Activated T-helper 2 cell treated with anti-CD3 and anti-CD28 coated beads, Interferon-gamma antibody, Interleukin-2, Interleukin-4, amounts not matched to agents 10 μg/mL and 5 μg/mL and 100 μg/mL, durations not matched to agents 14 hours and 24 hours and 36 hours (primary cell): ENCODE measurements at regions of chr11 and their contacts with region 1.

Region 1: GRCh38 chr11:8911029-8911826 is at the start of gene AKIP1:
- DNase-seq: peak; percentile 73
- H3K4me3 Mint-ChIP-seq: peak within 1 kb of the TSS; percentile 94
- H3K27ac Mint-ChIP-seq: peak within 1 kb of the TSS; percentile 82
- H3K4me1 Mint-ChIP-seq: peaks cover 36% of the 10 kb centered on the region
- H3K27me3 Mint-ChIP-seq: peaks cover 30% of the 10 kb centered on the region
- total RNA-seq, gene AKIP1: 22.2 and 23.4 TPM in 2 replicates

Region 2: GRCh38 chr11:8899119-8899753 is 12.0 kb before region 1 on chr11:
- intact Hi-C with region 1: no loop called
- DNase-seq: no peak
- H3K4me3 Mint-ChIP-seq: no peak overlapping the region
- H3K27ac Mint-ChIP-seq: no peak overlapping the region
- H3K4me1 Mint-ChIP-seq: no peaks in the 10 kb centered on the region
- H3K27me3 Mint-ChIP-seq: peaks cover 7% of the 10 kb centered on the region

Region 3: DNA sequence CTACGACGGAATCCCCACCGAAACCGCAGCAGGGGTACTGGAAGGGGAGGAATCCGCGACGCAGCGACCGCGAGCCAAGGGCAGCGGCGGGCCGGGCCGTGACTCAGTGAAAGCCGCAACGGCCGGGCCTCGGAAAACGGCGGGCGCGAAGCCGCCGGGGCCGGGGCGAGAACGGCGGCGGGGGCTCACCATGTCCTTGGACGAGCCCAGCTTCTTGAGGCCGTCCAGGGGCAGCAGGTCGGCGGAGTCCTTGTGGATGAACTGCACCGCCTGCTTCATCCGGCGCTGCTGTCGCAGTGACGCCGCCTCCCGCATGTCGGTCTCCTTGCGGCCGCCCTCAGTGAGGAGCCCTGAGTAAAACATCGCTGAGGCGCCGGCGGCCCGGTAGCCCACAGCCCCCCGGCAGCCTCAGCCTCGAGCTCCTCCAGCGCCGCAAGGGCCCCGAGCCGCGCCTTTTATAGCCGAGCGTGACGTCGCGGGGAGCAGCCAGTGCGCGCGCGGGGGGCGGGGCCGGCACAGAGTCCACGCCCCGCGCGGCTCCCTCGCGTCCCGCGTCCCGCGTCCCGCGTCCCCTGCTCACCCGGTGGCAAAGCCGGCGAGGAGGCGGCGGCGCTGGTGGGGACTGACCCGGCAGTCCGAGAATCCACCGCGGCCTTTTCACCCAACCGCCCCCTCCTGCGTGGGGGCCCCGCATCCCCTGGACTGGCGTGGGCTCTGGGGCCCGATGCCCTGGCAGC is 92.5 kb after region 1 on chr11 and contains the start of gene NRIP3:
- intact Hi-C with region 1: loop called (anchors 5 kb)
- DNase-seq: peak; percentile 71
- H3K4me3 Mint-ChIP-seq: peak within 1 kb of the TSS; percentile 75
- H3K27ac Mint-ChIP-seq: peak within 1 kb of the TSS; percentile 23
- H3K4me1 Mint-ChIP-seq: peaks cover 29% of the 10 kb centered on the region
- H3K27me3 Mint-ChIP-seq: peaks cover 51% of the 10 kb centered on the region
- total RNA-seq, gene NRIP3: 5.0 and 5.5 TPM in 2 replicates

Region 4: DNA sequence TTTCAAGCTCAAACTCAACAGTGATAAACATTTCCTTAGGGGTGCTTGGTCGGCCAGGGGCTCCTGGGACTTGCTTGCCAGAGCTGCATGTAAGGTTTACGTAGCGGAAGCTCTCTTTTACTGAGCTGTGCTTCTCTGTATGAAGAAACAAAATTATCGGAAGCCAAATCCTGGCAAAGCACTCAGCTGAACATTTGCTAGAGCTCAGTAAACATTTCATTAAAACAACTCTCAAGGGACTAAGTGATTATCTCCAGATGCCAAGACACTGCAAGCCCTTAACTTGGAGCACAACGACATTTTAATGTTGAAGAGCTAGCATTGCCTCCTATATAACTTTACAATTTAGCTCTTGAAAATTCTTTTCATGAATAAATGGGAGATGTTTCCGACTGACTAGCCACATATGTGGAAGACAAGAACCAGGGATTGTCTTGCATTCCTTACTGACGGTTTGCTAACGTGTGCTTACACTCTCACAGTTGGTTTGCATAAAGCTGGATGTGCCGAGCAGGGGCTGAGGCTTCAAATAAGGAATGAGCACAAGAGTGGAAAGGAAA is 136.8 kb after region 1 on chr11:
- intact Hi-C with region 1: no loop called
- DNase-seq: no peak
- H3K4me3 Mint-ChIP-seq: no peak overlapping the region
- H3K27ac Mint-ChIP-seq: no peak overlapping the region
- H3K4me1 Mint-ChIP-seq: no peaks in the 10 kb centered on the region
- H3K27me3 Mint-ChIP-seq: peaks cover 16% of the 10 kb centered on the region